A673 (cell line): ENCODE measurements at regions of chr1 and their contacts with region 1.

Region 1: DNA sequence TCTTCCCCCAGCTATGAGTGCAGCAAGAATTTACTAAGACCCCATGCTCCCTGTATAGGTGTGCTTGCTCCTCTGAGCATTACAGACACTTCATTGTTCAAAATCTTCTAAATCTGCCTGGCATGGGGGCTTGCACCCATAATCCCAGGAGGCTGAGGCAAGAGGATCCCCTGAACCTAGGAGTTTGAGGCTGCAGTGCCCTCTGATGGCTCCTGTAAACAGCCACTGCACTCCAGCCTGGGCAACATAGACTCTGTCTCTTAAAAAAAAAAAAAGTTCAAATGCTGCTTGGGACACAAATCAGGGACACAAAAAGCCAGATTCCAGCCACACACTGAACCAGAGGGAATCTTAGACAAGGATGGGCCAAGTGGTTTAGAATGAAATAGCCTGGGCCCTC is 3.4 kb upstream of the ACOT7 start:
- DNase-seq: no peak
- H3K4me3 ChIP-seq: no peak overlapping the region
- H3K27ac ChIP-seq: no peak overlapping the region
- H3K4me1 ChIP-seq: peaks cover 13% of the 10 kb centered on the region
- H3K27me3 ChIP-seq: no peaks in the 10 kb centered on the region
- CTCF ChIP-seq: 0 out of 2 replicates have a peak, but pooled peaks have one; percentile 25

Region 2: GRCh38 chr1:5267603-5268235 is 1129.3 kb before region 1 on chr1:
- CTCF ChIA-PET with region 1: no interaction called
- POLR2A ChIA-PET with region 1: no interaction called
- intact Hi-C with region 1: no loop called
- DNase-seq: peak; percentile 8
- H3K4me3 ChIP-seq: no peak overlapping the region
- H3K27ac ChIP-seq: no peak overlapping the region
- H3K4me1 ChIP-seq: no peaks in the 10 kb centered on the region
- H3K27me3 ChIP-seq: no peaks in the 10 kb centered on the region
- CTCF ChIP-seq: no peak

Region 3: DNA sequence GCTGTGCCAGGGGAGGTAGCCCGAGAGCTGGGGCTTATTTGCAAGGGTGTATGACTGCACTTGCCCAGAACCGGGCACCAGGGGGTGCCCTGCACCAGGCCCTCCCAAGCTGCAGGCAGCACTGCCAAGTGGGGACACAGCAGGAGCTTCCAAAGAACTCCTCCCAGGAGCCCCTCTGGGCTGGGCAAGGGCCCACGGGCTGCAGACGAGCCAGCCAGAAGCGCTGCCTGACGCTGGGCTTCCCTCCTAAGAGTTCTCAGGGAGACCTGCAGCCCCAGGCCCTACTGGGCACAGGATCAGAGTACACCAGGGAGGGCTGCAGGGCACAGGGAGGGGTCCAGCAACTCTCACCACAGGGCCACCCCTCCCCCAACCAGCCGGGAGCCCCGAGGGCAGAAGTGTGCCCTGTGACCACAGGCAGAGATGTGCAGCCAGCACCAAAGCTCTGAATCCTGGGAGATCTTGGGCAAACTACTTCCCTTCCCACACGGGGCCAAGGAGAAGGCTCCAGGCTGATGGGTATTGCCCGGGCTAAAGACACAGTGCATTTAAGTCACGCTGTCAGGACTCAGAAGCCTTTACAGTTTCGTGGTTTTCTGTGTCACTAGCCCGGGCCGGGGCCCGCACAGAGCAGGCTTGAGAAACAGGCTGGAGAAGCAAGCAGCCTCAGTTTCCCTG is 287.9 kb before region 1 on chr1:
- CTCF ChIA-PET with region 1: no interaction called
- POLR2A ChIA-PET with region 1: no interaction called
- intact Hi-C with region 1: loop called (anchors 5 kb)
- DNase-seq: peak; percentile 77
- H3K4me3 ChIP-seq: no peak overlapping the region
- H3K27ac ChIP-seq: no peak overlapping the region
- H3K4me1 ChIP-seq: no peaks in the 10 kb centered on the region
- H3K27me3 ChIP-seq: no peaks in the 10 kb centered on the region
- CTCF ChIP-seq: peak; percentile 66